Activated T-helper 1 cell treated with anti-CD3 and anti-CD28 coated beads, Interleukin-12 subunit alpha, Interleukin-12 subunit beta, Interleukin-2, Interleukin-4 antibody, amounts not matched to agents 30 ng/mL and 10 ng/mL and 1 ng/mL, durations not matched to agents 14 hours and 24 hours and 36 hours (primary cell): ENCODE measurements at regions of chr6 and their contacts with region 1.

Region 1: DNA sequence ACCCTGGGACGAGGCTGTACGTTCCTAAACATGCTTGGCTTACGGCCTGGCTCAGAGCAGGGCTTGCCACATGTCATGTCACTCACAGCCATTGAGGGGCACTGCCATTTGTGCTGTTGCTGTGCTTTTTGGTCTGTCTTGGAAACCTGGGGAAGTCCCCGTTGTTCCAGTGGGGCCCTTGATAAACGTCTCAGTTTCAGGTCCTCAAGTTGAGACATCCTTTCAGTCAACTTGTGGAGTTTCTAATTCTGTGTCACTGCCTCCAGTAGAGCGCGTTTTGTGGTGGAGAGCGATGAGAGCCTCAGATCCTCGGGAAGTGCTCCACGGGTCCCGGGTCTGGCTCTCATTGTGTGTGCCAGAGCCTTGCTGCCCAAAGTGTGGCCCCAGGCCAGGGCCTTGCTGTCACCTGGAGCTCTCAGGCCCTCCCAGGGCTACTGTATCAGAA is 43.0 kb upstream of the CCR6 start:
- DNase-seq: peak; percentile 14
- H3K4me3 Mint-ChIP-seq: no peak overlapping the region
- H3K27ac Mint-ChIP-seq: no peak overlapping the region
- H3K4me1 Mint-ChIP-seq: peaks cover 14% of the 10 kb centered on the region
- H3K27me3 Mint-ChIP-seq: peaks cover 11% of the 10 kb centered on the region

Region 2: DNA sequence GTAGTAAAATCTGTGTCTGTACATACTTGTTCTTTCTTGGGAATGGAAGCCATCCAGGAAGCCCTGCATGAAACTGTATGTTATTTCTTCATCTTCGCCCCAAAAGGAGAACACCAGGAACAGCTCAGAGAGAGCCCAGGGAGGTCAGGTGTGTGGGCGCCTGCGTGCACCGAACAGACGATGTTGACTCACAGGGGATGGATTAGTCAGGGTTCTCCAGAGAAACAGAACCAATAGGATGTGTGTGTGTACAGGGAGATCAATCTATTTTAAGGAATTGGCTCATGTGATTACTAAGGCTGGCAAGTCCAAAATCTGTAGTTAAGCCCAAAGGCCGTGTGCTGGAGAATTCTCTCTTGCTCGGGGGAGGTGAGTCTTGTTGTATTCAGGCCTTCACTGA is 169.3 kb before region 1 on chr6:
- intact Hi-C with region 1: no loop called
- DNase-seq: no peak
- H3K4me3 Mint-ChIP-seq: no peak overlapping the region
- H3K27ac Mint-ChIP-seq: no peak overlapping the region
- H3K4me1 Mint-ChIP-seq: peaks cover 46% of the 10 kb centered on the region
- H3K27me3 Mint-ChIP-seq: no peaks in the 10 kb centered on the region

Region 3: DNA sequence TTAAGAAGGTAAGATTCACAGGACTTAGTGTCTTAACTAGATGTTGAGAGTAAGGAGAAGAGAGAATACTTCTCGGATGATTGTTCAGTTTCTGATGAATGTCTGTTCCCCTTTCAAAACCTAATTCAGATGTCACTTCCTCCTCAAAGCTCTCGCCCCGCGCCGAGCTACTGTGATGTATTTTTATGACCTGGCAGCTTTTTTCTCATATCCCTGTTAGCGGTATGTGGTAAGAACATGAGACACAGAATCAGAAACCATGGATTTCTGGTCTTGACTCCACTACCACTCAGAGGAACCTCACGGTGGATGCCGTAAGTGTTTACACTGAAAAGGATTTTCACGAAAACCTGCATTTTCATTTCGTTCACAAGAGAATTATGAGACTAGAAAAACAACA is 32.3 kb before region 1 on chr6:
- intact Hi-C with region 1: loop called (anchors 2 kb)
- DNase-seq: peak; percentile 29
- H3K4me3 Mint-ChIP-seq: peak overlapping the region; percentile 19
- H3K27ac Mint-ChIP-seq: peak overlapping the region; percentile 33
- H3K4me1 Mint-ChIP-seq: peaks cover 21% of the 10 kb centered on the region
- H3K27me3 Mint-ChIP-seq: no peaks in the 10 kb centered on the region

Region 4: GRCh38 chr6:167119670-167120381 is 40.0 kb after region 1 on chr6:
- intact Hi-C with region 1: no loop called
- DNase-seq: no peak
- H3K4me3 Mint-ChIP-seq: no peak overlapping the region
- H3K27ac Mint-ChIP-seq: no peak overlapping the region
- H3K4me1 Mint-ChIP-seq: no peaks in the 10 kb centered on the region
- H3K27me3 Mint-ChIP-seq: peaks cover 7% of the 10 kb centered on the region

Region 5: GRCh38 chr6:167141667-167142432 is 62.0 kb after region 1 on chr6:
- intact Hi-C with region 1: loop called (anchors 1 kb)
- DNase-seq: peak; percentile 8
- H3K4me3 Mint-ChIP-seq: no peak overlapping the region
- H3K27ac Mint-ChIP-seq: no peak overlapping the region
- H3K4me1 Mint-ChIP-seq: no peaks in the 10 kb centered on the region
- H3K27me3 Mint-ChIP-seq: peaks cover 6% of the 10 kb centered on the region

Region 6: GRCh38 chr6:167998215-167998614 is 918.3 kb after region 1 on chr6:
- intact Hi-C with region 1: no loop called
- DNase-seq: no peak
- H3K4me3 Mint-ChIP-seq: no peak overlapping the region
- H3K27ac Mint-ChIP-seq: no peak overlapping the region
- H3K4me1 Mint-ChIP-seq: no peaks in the 10 kb centered on the region
- H3K27me3 Mint-ChIP-seq: no peaks in the 10 kb centered on the region